Activated CD4-positive, alpha-beta T cell treated with anti-CD3 and anti-CD28 coated beads, Interleukin-2, amount 10 ng/mL, durations not matched to agents 24 days and 14 days (primary cell): ENCODE measurements at regions of chr16 and their contacts with region 1.

Region 1: GRCh38 chr16:89363621-89364393 is 126.6 kb downstream of the ANKRD11 start:
- DNase-seq: peak; percentile 82
- H3K4me3 Mint-ChIP-seq: peak overlapping the region; percentile 63
- H3K27ac Mint-ChIP-seq: peak overlapping the region; percentile 86
- H3K4me1 Mint-ChIP-seq: peaks cover 70% of the 10 kb centered on the region
- H3K27me3 Mint-ChIP-seq: no peaks in the 10 kb centered on the region

Region 2: GRCh38 chr16:89319883-89320781 is 43.7 kb before region 1 on chr16:
- intact Hi-C with region 1: loop called (anchors 1 kb)
- DNase-seq: peak; percentile 77
- H3K4me3 Mint-ChIP-seq: peak overlapping the region; percentile 71
- H3K27ac Mint-ChIP-seq: peak overlapping the region; percentile 88
- H3K4me1 Mint-ChIP-seq: peaks cover 83% of the 10 kb centered on the region
- H3K27me3 Mint-ChIP-seq: no peaks in the 10 kb centered on the region

Region 3: GRCh38 chr16:89345642-89346150 is 18.1 kb before region 1 on chr16:
- intact Hi-C with region 1: loop called (anchors 1 kb)
- DNase-seq: no peak
- H3K4me3 Mint-ChIP-seq: no peak overlapping the region
- H3K27ac Mint-ChIP-seq: peak overlapping the region; percentile 22
- H3K4me1 Mint-ChIP-seq: peaks cover 58% of the 10 kb centered on the region
- H3K27me3 Mint-ChIP-seq: no peaks in the 10 kb centered on the region

Region 4: GRCh38 chr16:89381788-89382187 is 18.0 kb after region 1 on chr16:
- intact Hi-C with region 1: loop called (anchors 1 kb)
- DNase-seq: no peak
- H3K4me3 Mint-ChIP-seq: no peak overlapping the region
- H3K27ac Mint-ChIP-seq: peak overlapping the region; percentile 52
- H3K4me1 Mint-ChIP-seq: peaks cover 55% of the 10 kb centered on the region
- H3K27me3 Mint-ChIP-seq: no peaks in the 10 kb centered on the region

Region 5: GRCh38 chr16:89422905-89423630 is 59.3 kb after region 1 on chr16:
- intact Hi-C with region 1: loop called (anchors 5 kb)
- DNase-seq: peak; percentile 81
- H3K4me3 Mint-ChIP-seq: peak overlapping the region; percentile 50
- H3K27ac Mint-ChIP-seq: peak overlapping the region; percentile 75
- H3K4me1 Mint-ChIP-seq: peaks cover 66% of the 10 kb centered on the region
- H3K27me3 Mint-ChIP-seq: no peaks in the 10 kb centered on the region

Region 6: GRCh38 chr16:89507834-89508590 is 144.2 kb after region 1 on chr16 and contains the start of gene SPG7:
- intact Hi-C with region 1: loop called (anchors 2 kb)
- DNase-seq: peak; percentile 98
- H3K4me3 Mint-ChIP-seq: peak within 1 kb of the TSS; percentile 95
- H3K27ac Mint-ChIP-seq: peak within 1 kb of the TSS; percentile 95
- H3K4me1 Mint-ChIP-seq: peaks cover 27% of the 10 kb centered on the region
- H3K27me3 Mint-ChIP-seq: no peaks in the 10 kb centered on the region
- total RNA-seq, gene SPG7: 109 and 110 TPM in 2 replicates